CD8-positive, alpha-beta T cell (primary cell): ENCODE measurements at regions of chr3 and their contacts with region 1.

Region 1: DNA sequence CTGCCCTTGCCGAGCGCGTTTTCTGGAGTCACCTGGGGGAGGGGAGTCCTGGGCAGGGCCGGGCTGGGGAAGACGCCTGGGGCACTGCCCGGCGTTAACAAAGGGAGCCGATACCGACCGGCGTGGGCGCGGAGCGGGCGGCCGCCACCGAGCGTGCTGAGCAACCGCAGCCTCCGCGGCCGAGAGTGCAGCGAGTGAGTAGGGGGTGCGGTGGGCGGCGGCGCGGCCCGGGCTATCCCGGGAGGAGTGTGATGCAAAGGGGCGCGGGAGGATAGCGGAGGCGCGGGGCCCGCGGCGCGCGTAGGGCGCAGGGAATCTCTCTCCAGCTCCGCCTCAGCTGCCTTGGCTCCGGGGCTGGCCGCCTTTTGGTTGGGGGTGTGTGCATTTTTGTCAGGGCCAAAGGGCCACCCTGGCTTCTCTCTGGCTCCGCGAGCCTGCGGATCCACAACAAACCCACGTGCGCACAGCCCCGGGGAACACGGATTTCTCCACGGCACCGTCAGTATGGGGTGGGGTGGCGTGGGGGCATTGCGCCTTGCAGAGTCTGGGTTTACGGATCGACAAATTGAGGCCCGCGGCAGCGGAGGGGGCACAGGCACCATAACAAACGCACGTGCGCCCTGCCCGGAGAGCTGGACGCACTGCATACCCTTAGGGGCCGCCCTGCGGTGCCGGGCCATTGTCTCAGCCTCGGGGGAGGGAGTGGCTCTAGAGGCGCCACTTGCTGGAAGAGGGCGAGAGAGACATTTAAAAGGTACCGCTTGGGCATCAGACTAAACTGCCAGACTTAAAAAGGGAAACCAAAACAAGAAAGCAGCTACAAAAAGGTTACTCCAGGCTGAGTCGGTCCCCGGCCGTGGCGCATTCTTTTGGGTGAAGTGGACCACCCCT is 560 bp downstream of the ST6GAL1 start:
- DNase-seq: peak; percentile 23 to 88 (median 72)
- ATAC-seq: peak; percentile 77
- H3K4me3 ChIP-seq: peak overlapping the region; percentile 83 to 94
- H3K4me3 Mint-ChIP-seq: peak overlapping the region; percentile 99
- H3K27ac ChIP-seq: peak overlapping the region; percentile 81 to 83
- H3K27ac Mint-ChIP-seq: peak overlapping the region; percentile 95
- H3K4me1 ChIP-seq: peaks cover 17% of the 10 kb centered on the region
- H3K4me1 Mint-ChIP-seq: peaks cover 38% of the 10 kb centered on the region
- H3K27me3 ChIP-seq: no peaks in the 10 kb centered on the region
- H3K27me3 Mint-ChIP-seq: no peaks in the 10 kb centered on the region
- CTCF ChIP-seq: no peak

Region 2: DNA sequence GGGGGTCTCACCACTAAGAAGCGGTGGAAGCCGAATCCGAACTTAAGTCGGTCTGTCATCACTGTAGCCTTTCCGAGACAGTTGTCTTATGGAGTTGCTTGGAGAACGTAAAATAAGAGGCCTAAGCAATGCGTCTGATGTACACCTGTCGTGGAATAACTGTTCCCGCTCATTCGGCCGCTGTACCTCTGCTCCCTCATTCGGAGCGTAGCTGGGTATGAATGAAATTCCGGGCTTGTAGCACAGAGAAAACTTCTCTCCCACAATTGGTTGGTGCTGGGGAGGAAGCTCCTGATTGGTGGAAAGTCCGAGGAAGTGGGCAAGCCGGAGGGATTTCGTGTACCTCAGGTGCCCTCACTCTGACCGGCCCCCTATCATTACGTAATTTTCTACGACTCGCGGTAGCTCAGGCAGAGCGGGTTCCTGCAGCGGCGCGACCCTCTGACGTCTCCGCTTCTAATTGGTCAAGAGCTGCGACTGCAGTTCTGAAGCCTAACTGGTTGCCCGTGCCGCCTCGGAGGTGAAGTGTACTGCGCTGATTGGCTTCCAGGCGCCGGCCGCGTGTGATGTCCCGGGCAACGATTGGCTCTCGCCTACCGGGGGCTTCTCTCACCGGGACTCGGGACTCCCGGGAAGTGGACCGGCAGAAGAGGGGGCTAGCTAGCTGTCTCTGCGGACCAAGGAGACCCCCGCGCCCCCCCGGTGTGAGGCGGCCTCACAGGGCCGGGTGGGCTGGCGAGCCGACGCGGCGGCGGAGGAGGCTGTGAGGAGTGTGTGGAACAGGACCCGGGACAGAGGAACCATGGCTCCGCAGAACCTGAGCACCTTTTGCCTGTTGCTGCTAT is 360.6 kb before region 1 on chr3 and contains the start of gene DNAJB11:
- CTCF ChIA-PET with region 1: no interaction called
- POLR2A ChIA-PET with region 1: no interaction called
- intact Hi-C with region 1: loop called (anchors 2 to 5 kb)
- DNase-seq: peak; percentile 94 to 100 (median 97)
- ATAC-seq: peak; percentile 82
- H3K4me3 ChIP-seq: peak within 1 kb of the TSS; percentile 73 to 96
- H3K4me3 Mint-ChIP-seq: peak within 1 kb of the TSS; percentile 94
- H3K27ac ChIP-seq: peak within 1 kb of the TSS; percentile 94 to 97
- H3K27ac Mint-ChIP-seq: peak within 1 kb of the TSS; percentile 98
- H3K4me1 ChIP-seq: peaks cover 30% of the 10 kb centered on the region
- H3K4me1 Mint-ChIP-seq: peaks cover 59% of the 10 kb centered on the region
- H3K27me3 ChIP-seq: no peaks in the 10 kb centered on the region
- H3K27me3 Mint-ChIP-seq: no peaks in the 10 kb centered on the region
- CTCF ChIP-seq: no peak
- total RNA-seq, gene DNAJB11: 70.2 to 73.4 TPM

Region 3: DNA sequence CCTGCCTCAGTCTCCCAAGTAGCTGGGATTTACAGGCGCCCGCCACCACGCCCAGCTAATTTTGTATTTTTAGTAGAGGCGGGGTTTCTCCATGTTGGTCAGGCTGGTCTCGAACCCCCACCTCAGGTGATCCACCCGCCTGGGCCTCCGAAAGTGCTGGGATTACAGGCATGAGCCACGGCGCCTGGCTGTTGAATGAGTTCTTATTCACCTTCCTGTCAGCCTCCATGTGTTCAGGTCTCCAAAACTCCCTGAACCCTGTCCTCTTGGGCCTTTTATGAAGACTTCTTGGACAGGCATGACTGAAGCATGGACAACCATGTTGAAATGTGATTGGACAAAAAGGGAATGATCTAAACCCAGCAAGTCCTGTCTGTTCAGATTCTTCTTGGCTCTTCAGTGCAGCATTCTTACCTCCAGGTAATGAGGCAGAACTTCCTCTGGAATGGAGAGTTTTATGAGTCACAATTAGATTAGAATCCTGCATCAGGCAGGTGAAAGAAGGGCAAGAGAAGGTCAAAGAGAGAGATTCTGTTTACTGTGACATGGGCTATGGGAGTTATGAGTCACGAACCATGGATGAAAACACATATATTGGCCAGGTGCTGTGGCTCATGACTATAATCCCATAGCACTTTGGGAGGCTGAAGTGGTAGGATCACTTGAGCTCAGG is 170.6 kb before region 1 on chr3:
- CTCF ChIA-PET with region 1: no interaction called
- POLR2A ChIA-PET with region 1: no interaction called
- intact Hi-C with region 1: no loop called
- DNase-seq: no peak
- ATAC-seq: no peak
- H3K4me3 ChIP-seq: no peak overlapping the region
- H3K4me3 Mint-ChIP-seq: no peak overlapping the region
- H3K27ac ChIP-seq: no peak overlapping the region
- H3K27ac Mint-ChIP-seq: no peak overlapping the region
- H3K4me1 ChIP-seq: no peaks in the 10 kb centered on the region
- H3K4me1 Mint-ChIP-seq: no peaks in the 10 kb centered on the region
- H3K27me3 ChIP-seq: no peaks in the 10 kb centered on the region
- H3K27me3 Mint-ChIP-seq: no peaks in the 10 kb centered on the region
- CTCF ChIP-seq: no peak

Region 4: DNA sequence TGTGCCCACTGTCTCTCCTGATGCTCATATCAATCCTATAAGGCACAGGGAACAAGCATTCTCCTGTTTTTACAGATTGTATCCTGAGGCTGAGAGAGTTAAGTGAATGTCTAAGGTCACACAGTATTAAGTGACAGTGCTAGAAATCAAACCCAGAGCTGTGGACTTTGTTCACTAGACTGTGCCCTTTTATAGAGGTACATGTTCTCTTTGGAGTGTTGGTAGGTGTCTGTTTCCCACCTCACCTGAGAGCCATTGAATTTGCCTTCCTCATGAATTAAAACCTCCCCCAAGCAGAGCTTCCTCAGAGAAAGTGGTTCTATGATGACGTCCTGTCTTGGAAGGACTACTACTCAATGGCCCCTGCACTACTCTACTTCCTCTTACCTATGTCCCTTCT is 75.9 kb before region 1 on chr3:
- CTCF ChIA-PET with region 1: interaction called, 120 read pairs
- POLR2A ChIA-PET with region 1: interaction called, 16 read pairs
- intact Hi-C with region 1: no loop called
- DNase-seq: no peak
- ATAC-seq: no peak
- H3K4me3 ChIP-seq: no peak overlapping the region
- H3K4me3 Mint-ChIP-seq: no peak overlapping the region
- H3K27ac ChIP-seq: no peak overlapping the region
- H3K27ac Mint-ChIP-seq: no peak overlapping the region
- H3K4me1 ChIP-seq: no peaks in the 10 kb centered on the region
- H3K4me1 Mint-ChIP-seq: peaks cover 16% of the 10 kb centered on the region
- H3K27me3 ChIP-seq: no peaks in the 10 kb centered on the region
- H3K27me3 Mint-ChIP-seq: no peaks in the 10 kb centered on the region
- CTCF ChIP-seq: no peak

Region 5: GRCh38 chr3:187025656-187026316 is 94.9 kb after region 1 on chr3:
- CTCF ChIA-PET with region 1: interaction called, 6 read pairs
- POLR2A ChIA-PET with region 1: interaction called, 27 read pairs
- intact Hi-C with region 1: loop called (anchors 1 to 5 kb)
- DNase-seq: peak in 4 of 9 experiments; percentile 39 to 72 (median 48)
- ATAC-seq: peak; percentile 3
- H3K4me3 ChIP-seq: peak overlapping the region; percentile 52 to 71
- H3K4me3 Mint-ChIP-seq: peak overlapping the region; percentile 83
- H3K27ac ChIP-seq: peak overlapping the region; percentile 62 to 64
- H3K27ac Mint-ChIP-seq: peak overlapping the region; percentile 97
- H3K4me1 ChIP-seq: peaks cover 44% of the 10 kb centered on the region
- H3K4me1 Mint-ChIP-seq: peaks cover 68% of the 10 kb centered on the region
- H3K27me3 ChIP-seq: no peaks in the 10 kb centered on the region
- H3K27me3 Mint-ChIP-seq: no peaks in the 10 kb centered on the region
- CTCF ChIP-seq: no peak

Region 6: GRCh38 chr3:187112934-187113793 is 182.3 kb after region 1 on chr3:
- CTCF ChIA-PET with region 1: interaction called, 16 read pairs
- POLR2A ChIA-PET with region 1: no interaction called
- intact Hi-C with region 1: no loop called
- DNase-seq: peak in 2 of 9 experiments; percentile 61 to 70
- ATAC-seq: peak; percentile 58
- H3K4me3 ChIP-seq: no peak overlapping the region
- H3K4me3 Mint-ChIP-seq: no peak overlapping the region
- H3K27ac ChIP-seq: no peak overlapping the region
- H3K27ac Mint-ChIP-seq: no peak overlapping the region
- H3K4me1 ChIP-seq: no peaks in the 10 kb centered on the region
- H3K4me1 Mint-ChIP-seq: peaks cover 7% of the 10 kb centered on the region
- H3K27me3 ChIP-seq: no peaks in the 10 kb centered on the region
- H3K27me3 Mint-ChIP-seq: no peaks in the 10 kb centered on the region
- CTCF ChIP-seq: peak; percentile 81

Region 7: DNA sequence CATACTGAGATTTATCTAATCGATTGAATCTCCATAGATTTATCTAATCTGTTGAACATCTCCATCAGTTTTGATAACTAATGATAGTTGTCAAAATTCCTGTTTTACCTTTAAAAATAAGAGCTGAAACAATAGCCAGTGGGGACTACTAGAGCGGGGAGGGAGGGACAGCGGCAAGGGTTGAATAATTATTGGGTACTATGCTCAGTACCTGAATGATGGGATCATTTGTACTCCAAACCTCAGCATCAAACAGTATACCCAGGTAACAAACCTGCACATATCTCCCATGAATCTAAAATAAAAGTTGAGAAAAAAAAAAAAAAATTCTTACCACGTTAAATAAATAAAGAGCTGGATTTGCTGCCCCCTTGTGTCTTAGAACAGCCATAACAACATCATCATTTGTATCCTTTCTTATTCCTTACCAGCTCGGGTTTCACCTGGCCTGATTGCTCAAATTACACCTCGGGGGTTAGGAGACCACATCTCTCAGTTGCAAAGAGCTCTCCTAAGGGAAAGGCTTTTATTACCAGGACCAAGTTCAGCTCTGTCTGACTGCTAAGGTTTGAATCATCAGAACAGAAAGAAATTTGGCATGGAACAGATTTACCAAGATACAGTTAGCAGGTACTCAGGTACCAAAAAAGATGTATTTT is 234.1 kb after region 1 on chr3:
- CTCF ChIA-PET with region 1: interaction called, 5 read pairs
- POLR2A ChIA-PET with region 1: no interaction called
- intact Hi-C with region 1: loop called in 1 of 2 experiments (anchors 5 kb)
- DNase-seq: peak in 6 of 9 experiments; percentile 8 to 83 (median 38)
- ATAC-seq: peak; percentile 77
- H3K4me3 ChIP-seq: no peak overlapping the region
- H3K4me3 Mint-ChIP-seq: no peak overlapping the region
- H3K27ac ChIP-seq: no peak overlapping the region
- H3K27ac Mint-ChIP-seq: no peak overlapping the region
- H3K4me1 ChIP-seq: no peaks in the 10 kb centered on the region
- H3K4me1 Mint-ChIP-seq: peaks cover 3% of the 10 kb centered on the region
- H3K27me3 ChIP-seq: peaks cover 0 to 3% of the 10 kb centered on the region in 2 experiments
- H3K27me3 Mint-ChIP-seq: no peaks in the 10 kb centered on the region
- CTCF ChIP-seq: peak; percentile 90